CD4-positive, alpha-beta T cell (primary cell): ENCODE measurements at regions of chrX and their contacts with region 1.

Region 1: DNA sequence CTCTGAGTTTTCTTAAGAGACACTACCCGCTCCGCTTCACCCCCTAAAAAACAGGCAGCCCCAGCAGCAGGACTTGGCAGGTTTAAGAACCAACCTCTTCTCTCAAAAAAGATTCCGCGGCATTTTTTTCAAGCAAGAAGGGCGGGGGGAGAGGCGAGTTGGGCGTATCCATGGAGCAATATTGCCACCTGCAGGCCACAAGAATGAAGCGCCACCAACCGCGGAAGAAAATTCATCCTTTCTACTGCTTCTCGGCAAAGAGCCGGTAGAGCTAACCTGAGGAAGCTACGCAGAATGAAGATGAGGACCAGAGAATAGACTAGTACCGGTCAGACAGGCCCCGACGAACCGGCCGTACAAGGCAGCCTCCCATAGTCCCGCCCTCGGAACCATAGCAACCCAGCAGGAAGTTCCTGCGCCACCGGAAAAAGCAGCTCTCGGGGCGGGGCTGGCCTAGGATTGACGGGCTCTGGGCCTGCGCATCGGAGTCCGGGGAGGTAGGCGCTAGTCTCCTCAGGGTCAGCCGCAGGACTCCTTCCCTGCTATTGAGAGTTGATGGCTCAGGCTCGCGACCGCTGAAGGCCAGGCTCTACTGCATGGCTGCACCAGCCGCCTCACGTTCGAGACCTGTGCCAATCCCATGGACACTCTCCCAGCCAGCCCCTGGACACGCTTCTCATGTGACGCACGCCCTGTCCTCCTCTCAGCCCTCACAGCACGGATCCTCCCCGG is 76.9 kb downstream of the MAGED4 start:
- DNase-seq: peak; percentile 76 to 96 (median 86)
- ATAC-seq: peak; percentile 96
- H3K4me3 ChIP-seq: peak overlapping the region; percentile 67
- H3K4me3 Mint-ChIP-seq: peak overlapping the region; percentile 99
- H3K27ac ChIP-seq: peak overlapping the region; percentile 70 to 90
- H3K27ac Mint-ChIP-seq: peak overlapping the region; percentile 96
- H3K4me1 ChIP-seq: peaks cover 12% of the 10 kb centered on the region
- H3K4me1 Mint-ChIP-seq: peaks cover 23% of the 10 kb centered on the region
- H3K27me3 ChIP-seq: peaks cover 2 to 12% of the 10 kb centered on the region in 2 experiments
- H3K27me3 Mint-ChIP-seq: peaks cover 7% of the 10 kb centered on the region
- CTCF ChIP-seq: peak; percentile 77

Region 2: DNA sequence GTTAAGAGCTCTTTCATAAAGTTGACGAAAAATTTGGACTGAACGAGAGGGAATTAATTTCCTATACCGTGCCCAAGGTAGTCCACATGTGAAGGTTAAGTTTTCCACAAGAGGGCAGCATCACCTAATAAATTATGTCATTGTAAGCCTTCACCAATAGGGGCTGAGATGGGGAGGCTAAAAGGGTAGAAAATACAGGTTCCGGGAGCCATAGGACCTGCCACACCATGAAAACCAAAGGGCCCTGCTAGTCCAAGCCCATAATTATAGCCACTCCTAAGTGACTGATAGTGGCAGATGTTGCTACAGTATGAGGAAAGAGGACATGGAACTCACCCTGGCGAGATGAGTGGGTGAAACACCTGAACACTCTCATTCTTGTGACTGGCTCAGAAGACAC is 1569.8 kb before region 1 on chrX:
- CTCF ChIA-PET with region 1: no interaction called
- POLR2A ChIA-PET with region 1: no interaction called
- intact Hi-C with region 1: loop called in 1 of 2 experiments (anchors 5 kb)
- DNase-seq: peak in 4 of 14 experiments; percentile 11 to 47 (median 41)
- ATAC-seq: peak; percentile 48
- H3K4me3 ChIP-seq: no peak overlapping the region
- H3K4me3 Mint-ChIP-seq: no peak overlapping the region
- H3K27ac ChIP-seq: no peak overlapping the region
- H3K27ac Mint-ChIP-seq: no peak overlapping the region
- H3K4me1 ChIP-seq: no peaks in the 10 kb centered on the region
- H3K4me1 Mint-ChIP-seq: no peaks in the 10 kb centered on the region
- H3K27me3 ChIP-seq: no peaks in the 10 kb centered on the region
- H3K27me3 Mint-ChIP-seq: peaks cover 11% of the 10 kb centered on the region
- CTCF ChIP-seq: peak; percentile 56

Region 3: GRCh38 chrX:51336584-51336983 is 925.0 kb before region 1 on chrX:
- CTCF ChIA-PET with region 1: no interaction called
- POLR2A ChIA-PET with region 1: no interaction called
- intact Hi-C with region 1: loop called in 1 of 2 experiments (anchors 10 kb)
- DNase-seq: peak in 8 of 14 experiments; percentile 2 to 57 (median 26)
- ATAC-seq: peak; percentile 79
- H3K4me3 ChIP-seq: no peak overlapping the region
- H3K4me3 Mint-ChIP-seq: no peak overlapping the region
- H3K27ac ChIP-seq: no peak overlapping the region
- H3K27ac Mint-ChIP-seq: no peak overlapping the region
- H3K4me1 ChIP-seq: peaks cover 5% of the 10 kb centered on the region
- H3K4me1 Mint-ChIP-seq: no peaks in the 10 kb centered on the region
- H3K27me3 ChIP-seq: no peaks in the 10 kb centered on the region
- H3K27me3 Mint-ChIP-seq: no peaks in the 10 kb centered on the region
- CTCF ChIP-seq: peak; percentile 58

Region 4: GRCh38 chrX:51614353-51615012 is 647.1 kb before region 1 on chrX:
- CTCF ChIA-PET with region 1: interaction called, 4 read pairs
- POLR2A ChIA-PET with region 1: no interaction called
- intact Hi-C with region 1: loop called in 1 of 2 experiments (anchors 5 kb)
- DNase-seq: peak in 4 of 14 experiments; percentile 4 to 46 (median 30)
- ATAC-seq: no peak
- H3K4me3 ChIP-seq: no peak overlapping the region
- H3K4me3 Mint-ChIP-seq: no peak overlapping the region
- H3K27ac ChIP-seq: no peak overlapping the region
- H3K27ac Mint-ChIP-seq: no peak overlapping the region
- H3K4me1 ChIP-seq: no peaks in the 10 kb centered on the region
- H3K4me1 Mint-ChIP-seq: no peaks in the 10 kb centered on the region
- H3K27me3 ChIP-seq: peaks cover 0 to 13% of the 10 kb centered on the region in 2 experiments
- H3K27me3 Mint-ChIP-seq: peaks cover 51% of the 10 kb centered on the region
- CTCF ChIP-seq: no peak

Region 5: DNA sequence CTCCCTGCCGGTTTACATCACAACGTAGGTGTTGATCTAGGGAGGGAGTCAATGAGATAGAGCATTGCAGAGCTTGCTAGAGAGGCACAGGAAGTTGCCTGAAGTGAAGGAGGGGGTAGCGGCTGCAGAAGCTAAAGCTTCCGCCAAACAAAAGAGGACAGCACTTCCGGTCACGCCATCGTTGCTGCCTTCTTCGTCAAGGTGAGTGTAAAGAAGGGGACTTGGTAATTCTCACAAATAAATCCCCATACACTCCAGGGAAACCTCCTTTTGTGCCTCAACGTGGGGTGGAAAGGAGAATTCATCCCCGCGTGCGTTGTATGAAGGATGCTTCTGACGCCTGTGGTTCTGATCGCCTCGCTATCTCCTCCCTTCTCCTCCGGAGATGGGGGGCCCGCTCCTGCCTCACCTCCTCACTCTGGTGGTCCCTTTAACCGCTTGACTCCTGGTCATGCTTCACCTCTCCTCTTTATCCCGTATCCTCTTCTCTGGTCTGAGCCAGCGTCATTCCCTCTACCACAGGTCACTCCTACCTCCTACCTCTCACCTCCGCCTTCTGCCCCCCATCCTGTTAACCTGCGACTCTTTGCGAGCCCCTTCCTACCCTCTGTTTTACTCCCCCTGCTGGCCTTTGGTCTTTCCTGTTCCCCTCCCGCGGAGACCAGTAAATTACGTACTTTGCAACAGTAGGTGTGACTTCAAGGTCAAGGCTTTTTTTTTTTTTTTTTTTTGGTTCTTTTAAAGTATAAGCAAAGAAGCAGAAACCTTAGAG is 458.5 kb before region 1 on chrX:
- CTCF ChIA-PET with region 1: interaction called, 6 read pairs
- POLR2A ChIA-PET with region 1: no interaction called
- intact Hi-C with region 1: loop called in 1 of 2 experiments (anchors 10 kb)
- DNase-seq: peak; percentile 9 to 79 (median 42)
- ATAC-seq: peak; percentile 86
- H3K4me3 ChIP-seq: peak overlapping the region; percentile 80
- H3K4me3 Mint-ChIP-seq: peak overlapping the region; percentile 93
- H3K27ac ChIP-seq: peak overlapping the region; percentile 41 to 85
- H3K27ac Mint-ChIP-seq: peak overlapping the region; percentile 94
- H3K4me1 ChIP-seq: peaks cover 2% of the 10 kb centered on the region
- H3K4me1 Mint-ChIP-seq: peaks cover 30% of the 10 kb centered on the region
- H3K27me3 ChIP-seq: no peaks in the 10 kb centered on the region
- H3K27me3 Mint-ChIP-seq: no peaks in the 10 kb centered on the region
- CTCF ChIP-seq: peak; percentile 41

Region 6: DNA sequence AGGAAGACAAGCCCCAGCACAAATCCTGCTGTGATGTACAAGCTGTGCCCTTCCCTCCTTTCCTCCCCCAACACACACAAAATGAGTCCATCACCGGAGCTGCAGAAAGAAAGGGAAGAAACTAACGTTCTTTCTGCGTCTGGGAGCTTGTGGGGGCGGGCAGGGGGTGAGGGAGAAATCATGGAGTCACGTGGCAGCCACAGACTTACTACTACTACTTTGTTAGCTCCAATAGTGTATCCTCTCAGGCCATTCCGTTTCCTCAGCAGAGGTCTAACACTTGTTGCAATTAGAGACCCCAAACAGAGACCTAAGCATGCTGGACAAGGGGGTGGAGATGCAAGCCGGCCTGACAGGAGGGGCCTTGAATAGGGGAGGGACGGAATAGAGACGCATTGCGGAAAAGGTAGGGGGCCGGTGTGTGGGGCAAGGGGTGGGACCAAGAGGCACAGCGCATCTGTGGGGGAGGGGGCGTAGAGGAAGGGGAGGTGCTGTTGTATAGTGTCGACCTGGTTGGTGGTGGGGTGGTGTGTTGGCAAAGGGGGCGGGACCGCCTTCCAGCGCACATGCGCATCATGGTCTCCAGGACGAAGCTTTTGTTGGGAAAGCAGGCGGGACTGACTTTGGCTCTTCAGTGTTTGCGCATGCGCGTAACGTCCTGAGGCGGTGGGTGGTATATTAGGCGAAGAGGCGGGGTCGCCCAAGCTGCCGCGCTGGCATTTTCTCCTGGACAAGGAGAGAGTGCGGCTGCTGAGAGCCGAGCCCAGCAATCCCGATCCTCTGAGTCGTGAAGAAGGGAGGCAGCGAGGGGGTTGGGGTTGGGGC is 368.5 kb before region 1 on chrX and contains the start of gene MAGED1:
- CTCF ChIA-PET with region 1: no interaction called
- POLR2A ChIA-PET with region 1: interaction called, 8 read pairs
- intact Hi-C with region 1: loop called in 1 of 2 experiments (anchors 5 kb)
- DNase-seq: peak; percentile 52 to 88 (median 70)
- ATAC-seq: peak; percentile 92
- H3K4me3 ChIP-seq: peak within 1 kb of the TSS; percentile 65
- H3K4me3 Mint-ChIP-seq: peak within 1 kb of the TSS; percentile 95
- H3K27ac ChIP-seq: peak within 1 kb of the TSS; percentile 41 to 48
- H3K27ac Mint-ChIP-seq: peak within 1 kb of the TSS; percentile 78
- H3K4me1 ChIP-seq: peaks cover 25% of the 10 kb centered on the region
- H3K4me1 Mint-ChIP-seq: peaks cover 28% of the 10 kb centered on the region
- H3K27me3 ChIP-seq: no peaks in the 10 kb centered on the region
- H3K27me3 Mint-ChIP-seq: no peaks in the 10 kb centered on the region
- CTCF ChIP-seq: no peak
- total RNA-seq, gene MAGED1: 20.3 to 23.7 TPM

Region 7: DNA sequence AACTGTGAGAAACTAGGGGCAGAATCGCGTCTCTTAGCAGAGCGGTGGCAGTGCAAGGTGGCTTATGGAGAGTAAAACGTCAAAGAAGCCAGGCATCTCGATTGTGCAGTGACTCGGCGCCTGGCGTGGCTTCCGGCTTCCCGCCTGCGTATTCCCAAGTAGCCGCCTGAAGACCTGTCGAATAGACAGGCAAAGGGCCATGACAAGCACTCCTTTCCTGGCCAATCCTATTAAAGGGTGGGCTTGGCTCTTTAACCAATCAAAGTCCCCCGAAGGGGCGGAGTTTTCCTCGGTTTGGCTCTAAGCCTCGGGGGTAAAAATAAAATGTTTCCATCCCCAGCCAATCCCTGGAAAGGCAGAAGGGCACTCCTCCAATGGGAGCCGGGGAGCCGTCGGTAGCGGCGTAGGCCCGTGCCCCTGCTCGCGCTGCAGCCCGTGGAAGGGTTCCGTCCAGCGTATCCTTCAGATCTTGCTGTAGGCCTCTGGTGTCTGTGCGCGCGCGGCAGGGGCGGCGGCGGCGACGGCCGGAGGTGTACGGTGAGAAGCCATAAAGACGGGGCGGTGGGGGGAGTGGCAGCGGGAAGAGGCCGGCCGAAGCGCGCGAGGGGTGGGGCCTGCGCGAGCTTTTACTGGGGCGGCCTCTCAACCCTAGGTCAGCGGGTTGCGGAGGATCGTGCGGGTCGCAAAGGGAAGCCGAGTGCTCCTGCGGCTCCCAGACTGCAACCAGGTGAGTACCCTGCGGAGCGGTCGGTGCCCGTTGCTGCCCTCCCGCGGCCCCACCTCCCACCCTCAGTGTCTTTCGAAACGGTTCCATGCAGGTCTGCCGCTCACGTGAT is 832.3 kb after region 1 on chrX and contains the start of gene KANTR:
- CTCF ChIA-PET with region 1: no interaction called
- POLR2A ChIA-PET with region 1: no interaction called
- intact Hi-C with region 1: loop called in 1 of 2 experiments (anchors 10 kb)
- DNase-seq: peak; percentile 36 to 92 (median 72)
- ATAC-seq: peak; percentile 76
- H3K4me3 ChIP-seq: peak within 1 kb of the TSS; percentile 81
- H3K4me3 Mint-ChIP-seq: peak within 1 kb of the TSS; percentile 93
- H3K27ac ChIP-seq: peak within 1 kb of the TSS; percentile 58 to 85
- H3K27ac Mint-ChIP-seq: peak within 1 kb of the TSS; percentile 93
- H3K4me1 ChIP-seq: peaks cover 16% of the 10 kb centered on the region
- H3K4me1 Mint-ChIP-seq: peaks cover 35% of the 10 kb centered on the region
- H3K27me3 ChIP-seq: no peaks in the 10 kb centered on the region
- H3K27me3 Mint-ChIP-seq: no peaks in the 10 kb centered on the region
- CTCF ChIP-seq: no peak
- total RNA-seq, gene KANTR: 6.2 to 6.8 TPM

Region 8: DNA sequence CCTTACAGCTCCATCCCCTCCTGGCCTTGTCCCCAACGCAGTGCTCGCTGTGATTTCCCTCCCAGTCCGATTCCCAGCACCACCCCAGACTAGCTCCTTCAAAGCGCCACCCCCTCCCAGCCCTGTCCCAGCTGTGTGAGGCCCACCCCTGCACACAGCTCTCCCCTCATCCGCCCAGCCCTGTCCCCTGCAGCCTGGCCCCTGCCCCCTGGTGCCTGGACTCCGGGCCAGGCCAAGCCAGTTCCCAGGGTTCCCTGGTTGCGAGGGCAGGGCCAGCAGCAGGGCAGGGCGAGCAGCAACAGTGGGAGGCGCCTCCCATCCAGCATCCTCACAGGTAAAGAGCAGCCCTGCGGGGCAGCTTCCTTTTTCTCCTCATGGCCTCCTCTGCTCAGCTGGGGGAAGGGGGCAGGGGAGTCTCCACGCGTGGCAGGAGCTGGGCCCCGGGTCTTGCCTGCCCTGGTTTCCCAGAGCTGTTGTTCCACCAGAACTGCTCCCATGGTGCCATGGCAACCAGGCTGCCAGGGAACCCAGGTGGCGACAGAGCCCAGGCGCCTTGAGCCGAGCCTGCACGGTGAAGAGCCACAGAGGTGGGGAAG is 994.9 kb after region 1 on chrX:
- CTCF ChIA-PET with region 1: no interaction called
- POLR2A ChIA-PET with region 1: no interaction called
- intact Hi-C with region 1: no loop called
- DNase-seq: no peak
- ATAC-seq: no peak
- H3K4me3 ChIP-seq: no peak overlapping the region
- H3K4me3 Mint-ChIP-seq: no peak overlapping the region
- H3K27ac ChIP-seq: no peak overlapping the region
- H3K27ac Mint-ChIP-seq: no peak overlapping the region
- H3K4me1 ChIP-seq: peaks cover 2% of the 10 kb centered on the region
- H3K4me1 Mint-ChIP-seq: peaks cover 4% of the 10 kb centered on the region
- H3K27me3 ChIP-seq: no peaks in the 10 kb centered on the region
- H3K27me3 Mint-ChIP-seq: no peaks in the 10 kb centered on the region
- CTCF ChIP-seq: no peak